A549 (cell line): ENCODE measurements at regions of chr19 and their contacts with region 1.

Region 1: GRCh38 chr19:35066691-35067563 is 25.4 kb downstream of the HPN start:
- DNase-seq: peak; percentile 90 to 93
- ATAC-seq: peak; percentile 83 to 95
- H3K4me3 ChIP-seq: no peak overlapping the region; the same call in 2 of the 3 replicates
- H3K27ac ChIP-seq: no peak overlapping the region
- H3K4me1 ChIP-seq: peaks cover 9% of the 10 kb centered on the region; the same call in 2 of the 3 replicates
- CTCF ChIP-seq: peak; percentile 93
- EP300 ChIP-seq: no peak
- POLR2A ChIP-seq: no peak
- RAD21 ChIP-seq: peak; percentile 90 to 94

Region 2: GRCh38 chr19:34974646-34975045 is 92.3 kb before region 1 on chr19:
- CTCF ChIA-PET with region 1: interaction called, 14 read pairs
- POLR2A ChIA-PET with region 1: no interaction called
- DNase-seq: no peak
- ATAC-seq: no peak
- H3K4me3 ChIP-seq: no peak overlapping the region
- H3K27ac ChIP-seq: peak overlapping the region in 1 of 2 experiments; percentile 75; a peak in 2 of 6 replicates
- H3K4me1 ChIP-seq: peaks cover 18% of the 10 kb centered on the region
- CTCF ChIP-seq: no peak
- EP300 ChIP-seq: no peak
- POLR2A ChIP-seq: no peak
- RAD21 ChIP-seq: no peak

Region 3: GRCh38 chr19:35080613-35081170 is 13.8 kb after region 1 on chr19:
- CTCF ChIA-PET with region 1: interaction called, 64 read pairs
- POLR2A ChIA-PET with region 1: no interaction called
- DNase-seq: no peak
- ATAC-seq: no peak
- H3K4me3 ChIP-seq: no peak overlapping the region
- H3K27ac ChIP-seq: no peak overlapping the region
- H3K4me1 ChIP-seq: no peaks in the 10 kb centered on the region
- CTCF ChIP-seq: no peak
- EP300 ChIP-seq: no peak
- POLR2A ChIP-seq: no peak
- RAD21 ChIP-seq: no peak; a peak in 1 of 5 replicates

Region 4: DNA sequence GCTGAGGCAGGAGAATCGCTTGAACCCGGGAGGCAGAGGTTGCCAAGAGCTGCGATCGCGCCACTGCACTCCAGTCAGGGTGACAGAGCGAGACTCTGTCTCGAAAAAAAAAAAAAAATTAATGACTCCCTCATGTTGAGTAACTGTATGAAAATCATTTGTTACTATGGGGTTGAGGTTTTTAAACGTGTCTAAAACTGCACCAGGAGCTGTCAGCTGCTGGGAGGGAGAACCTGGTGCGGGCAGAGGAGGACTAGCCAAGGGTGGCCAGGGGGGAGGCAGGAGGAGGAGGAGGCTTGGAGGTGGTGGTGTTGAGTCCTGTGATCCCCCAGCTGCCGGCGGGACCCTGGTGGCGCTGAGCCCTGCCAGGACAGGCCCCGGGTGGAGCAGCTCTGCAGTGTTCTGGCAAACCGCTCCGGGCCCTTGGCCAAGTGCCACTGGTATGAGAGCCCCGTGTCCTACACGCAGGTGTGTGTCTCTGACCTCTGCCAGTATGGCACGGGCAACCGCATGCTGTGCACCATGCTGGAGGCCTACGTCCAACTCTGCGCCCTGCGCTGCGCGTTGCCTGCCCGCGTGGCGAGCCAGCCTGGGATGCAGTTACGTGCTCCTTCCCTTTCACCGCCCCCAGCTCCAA is 31.6 kb after region 1 on chr19:
- CTCF ChIA-PET with region 1: interaction called, 50 read pairs
- POLR2A ChIA-PET with region 1: no interaction called
- DNase-seq: no peak
- ATAC-seq: peak; percentile 22 to 37; a peak in 4 of 6 replicates
- H3K4me3 ChIP-seq: no peak overlapping the region
- H3K27ac ChIP-seq: no peak overlapping the region
- H3K4me1 ChIP-seq: no peaks in the 10 kb centered on the region
- CTCF ChIP-seq: no peak
- EP300 ChIP-seq: no peak
- POLR2A ChIP-seq: no peak
- RAD21 ChIP-seq: no peak

Region 5: DNA sequence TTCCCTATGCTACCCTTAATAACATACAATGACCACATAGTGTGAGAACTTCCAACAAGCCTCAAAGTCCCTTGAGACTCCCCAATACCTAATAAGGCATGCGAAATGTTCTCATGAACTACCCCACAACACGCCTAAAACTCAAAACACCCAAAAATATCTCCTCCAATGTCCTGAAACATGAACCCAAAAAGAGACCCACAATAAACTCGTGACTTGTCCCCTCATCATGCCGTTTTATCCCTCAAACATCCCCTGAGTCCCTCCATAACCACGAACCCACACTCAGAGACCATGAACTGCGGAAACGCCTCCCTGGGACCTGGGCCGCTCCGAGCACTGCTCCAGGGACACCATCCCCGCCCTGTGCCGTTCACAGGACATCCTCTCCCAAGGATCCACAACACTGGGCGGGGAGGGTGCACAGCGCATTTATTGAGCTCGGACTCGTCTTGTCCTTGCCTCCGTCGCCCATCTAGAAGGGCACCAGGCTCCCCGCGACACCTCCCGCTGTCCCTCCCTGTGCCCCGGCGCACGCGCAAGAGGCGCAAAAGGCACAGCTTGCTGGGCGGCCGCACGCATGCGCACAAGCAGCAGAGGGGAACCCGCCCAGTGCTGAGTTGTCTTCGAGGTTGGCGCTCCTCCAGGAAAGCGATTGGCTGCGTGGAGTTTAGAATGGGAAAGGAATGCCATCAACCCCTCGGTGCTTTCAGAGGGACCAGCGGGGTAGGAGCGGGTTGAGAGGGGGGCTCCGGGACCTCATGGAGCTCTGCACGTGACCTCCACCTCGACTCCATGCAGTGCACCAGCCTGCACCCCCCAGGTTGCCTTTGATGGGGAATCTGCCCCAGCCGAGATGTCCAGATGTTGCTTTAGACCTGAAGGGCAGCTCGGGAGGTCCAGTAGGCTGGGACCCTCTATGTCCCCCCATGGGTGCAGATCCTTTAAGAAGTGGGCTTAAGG is 57.5 kb after region 1 on chr19:
- CTCF ChIA-PET with region 1: interaction called, 11 read pairs
- POLR2A ChIA-PET with region 1: no interaction called
- DNase-seq: peak; percentile 95 to 100
- ATAC-seq: peak; percentile 82 to 96
- H3K4me3 ChIP-seq: peak overlapping the region; percentile 46
- H3K27ac ChIP-seq: peak overlapping the region; percentile 75 to 83
- H3K4me1 ChIP-seq: peaks cover 22% of the 10 kb centered on the region
- CTCF ChIP-seq: no peak
- EP300 ChIP-seq: no peak
- POLR2A ChIP-seq: peak; percentile 99
- RAD21 ChIP-seq: no peak

Region 6: DNA sequence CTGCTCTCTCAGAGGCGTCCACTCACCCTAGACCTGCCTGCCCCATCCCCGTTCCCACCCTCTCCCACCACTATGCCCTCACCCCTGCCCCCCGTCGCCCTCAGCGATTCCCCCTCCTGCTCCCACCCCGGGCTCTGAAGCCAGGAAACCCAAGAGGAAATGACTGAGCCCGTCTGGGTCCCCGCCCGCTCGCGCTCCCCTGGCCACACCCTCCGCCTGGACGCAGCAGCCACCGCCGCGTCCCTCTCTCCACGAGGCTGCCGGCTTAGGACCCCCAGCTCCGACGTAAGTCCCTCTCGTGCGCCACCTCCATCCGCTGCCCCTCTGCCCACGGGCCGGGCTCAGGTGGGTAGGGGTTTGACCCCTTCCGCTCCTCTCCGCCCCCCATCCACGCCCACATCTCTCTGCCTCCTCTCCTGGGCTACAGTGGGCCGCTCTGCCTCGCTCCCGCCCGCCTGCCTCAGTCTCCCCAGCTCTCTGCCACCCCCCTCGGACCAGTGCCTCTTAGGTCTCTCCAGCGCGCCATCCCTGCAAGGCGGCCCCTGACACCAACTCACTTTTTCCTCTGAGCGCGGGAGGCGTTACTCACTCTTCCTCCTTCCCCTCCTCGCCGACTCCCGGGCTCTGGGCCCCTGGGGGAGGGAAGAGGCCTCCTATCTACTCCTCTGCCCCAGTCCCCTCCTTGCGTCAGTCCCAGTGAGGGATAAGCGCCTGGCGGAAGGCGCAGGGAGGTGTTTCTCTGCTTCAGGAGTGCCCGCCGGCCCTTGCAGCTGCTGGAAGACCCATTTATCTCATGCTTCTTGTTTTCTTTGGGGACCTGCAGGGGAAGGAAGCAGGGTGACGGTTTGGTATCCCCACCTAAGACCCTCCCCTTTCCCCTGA is 87.8 kb after region 1 on chr19 and contains the start of gene FXYD5:
- CTCF ChIA-PET with region 1: interaction called, 12 read pairs
- POLR2A ChIA-PET with region 1: no interaction called
- DNase-seq: peak; percentile 76 to 96
- ATAC-seq: peak; percentile 74 to 88
- H3K4me3 ChIP-seq: peak within 1 kb of the TSS; percentile 68
- H3K27ac ChIP-seq: peak within 1 kb of the TSS; percentile 79 to 90
- H3K4me1 ChIP-seq: peaks cover 9% of the 10 kb centered on the region; the same call in 1 of the 3 replicates
- CTCF ChIP-seq: no peak
- EP300 ChIP-seq: no peak
- POLR2A ChIP-seq: peak; percentile 69
- RAD21 ChIP-seq: no peak
- polyA plus RNA-seq, gene FXYD5: 70.8 and 77.3 TPM in 2 replicates